ENCODE measurements at regions of chrX and their contacts with region 1.

Region 1: DNA sequence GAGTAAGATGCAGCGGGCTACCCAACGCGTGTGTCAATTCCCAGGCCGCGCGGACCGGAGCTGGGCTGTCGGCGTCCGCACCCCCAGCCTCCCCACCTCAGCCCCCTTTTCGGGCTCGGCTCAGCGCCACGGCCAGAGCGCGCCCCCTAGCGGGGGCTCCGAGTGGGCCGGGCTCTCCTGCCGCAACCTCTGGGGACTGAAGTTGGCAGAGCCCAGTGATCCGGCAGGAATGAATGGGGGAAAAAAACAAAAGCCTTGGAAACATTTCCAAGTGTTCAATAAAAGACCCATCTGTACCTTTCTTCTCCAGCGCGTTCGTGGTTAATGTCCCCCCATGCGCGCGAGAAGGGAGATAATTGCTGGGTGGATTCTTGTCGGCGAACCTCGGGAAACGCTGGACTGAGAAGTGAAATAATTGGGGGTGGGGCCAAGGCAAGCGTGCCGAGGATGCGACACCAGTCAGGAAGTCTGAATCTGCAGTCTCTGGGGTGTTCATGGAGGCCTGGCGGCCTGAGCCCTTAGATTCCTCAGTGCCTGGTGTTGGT is 5.2 kb upstream of the ARX start:
- DNase-seq: no peak
- ATAC-seq: peak; percentile 86
- H3K4me3 ChIP-seq: no peak overlapping the region
- H3K27ac ChIP-seq: no peak overlapping the region
- H3K4me1 ChIP-seq: no peaks in the 10 kb centered on the region
- H3K27me3 ChIP-seq: peaks cover 5 to 13% of the 10 kb centered on the region in 2 experiments
- CTCF ChIP-seq: peak; percentile 58 to 74 (median 59)
- EP300 ChIP-seq: no peak
- POLR2A ChIP-seq: no peak
- RAD21 ChIP-seq: peak; percentile 63

Region 2: DNA sequence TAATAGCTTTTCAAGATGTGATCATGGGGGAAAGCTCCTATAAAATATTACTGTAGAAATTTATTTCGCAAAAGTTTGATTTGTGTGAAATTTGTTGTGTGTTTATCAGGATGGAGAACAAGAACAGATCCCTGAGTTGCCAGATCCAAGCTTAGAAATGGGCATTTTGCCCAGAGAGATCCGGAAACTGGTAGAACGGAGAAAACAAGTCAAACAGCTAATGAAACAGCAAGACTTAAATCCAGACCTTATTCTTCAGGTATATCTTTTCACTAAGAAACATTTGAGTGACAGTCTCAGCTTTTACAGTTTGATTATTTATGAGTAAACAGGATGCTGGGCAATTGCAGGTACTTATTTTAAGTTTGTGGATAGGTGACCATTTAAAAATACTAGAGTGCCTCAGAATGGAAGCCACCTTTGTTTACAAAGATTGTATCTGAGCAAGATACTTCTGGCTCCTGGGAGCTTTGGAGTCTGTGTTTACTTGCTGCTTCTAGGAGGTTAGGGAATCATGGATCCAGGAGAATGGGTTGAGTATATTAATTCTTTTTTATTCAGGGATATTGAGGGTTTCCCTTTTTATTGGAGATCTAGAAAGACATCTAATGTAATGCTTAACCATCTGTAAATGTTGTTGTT is 272.7 kb before region 1 on chrX:
- CTCF ChIA-PET with region 1: interaction called, 10 read pairs
- POLR2A ChIA-PET with region 1: no interaction called
- RAD21 ChIA-PET with region 1: interaction called, 3 read pairs
- SMC1A ChIA-PET with region 1: no interaction called
- in situ Hi-C with region 1: no loop called
- intact Hi-C with region 1: loop called (anchors 1 kb)
- DNase-seq: no peak
- ATAC-seq: no peak
- H3K4me3 ChIP-seq: no peak overlapping the region
- H3K27ac ChIP-seq: no peak overlapping the region
- H3K4me1 ChIP-seq: no peaks in the 10 kb centered on the region
- H3K27me3 ChIP-seq: no peaks in the 10 kb centered on the region
- CTCF ChIP-seq: no peak
- EP300 ChIP-seq: no peak
- POLR2A ChIP-seq: no peak
- RAD21 ChIP-seq: no peak

Region 3: DNA sequence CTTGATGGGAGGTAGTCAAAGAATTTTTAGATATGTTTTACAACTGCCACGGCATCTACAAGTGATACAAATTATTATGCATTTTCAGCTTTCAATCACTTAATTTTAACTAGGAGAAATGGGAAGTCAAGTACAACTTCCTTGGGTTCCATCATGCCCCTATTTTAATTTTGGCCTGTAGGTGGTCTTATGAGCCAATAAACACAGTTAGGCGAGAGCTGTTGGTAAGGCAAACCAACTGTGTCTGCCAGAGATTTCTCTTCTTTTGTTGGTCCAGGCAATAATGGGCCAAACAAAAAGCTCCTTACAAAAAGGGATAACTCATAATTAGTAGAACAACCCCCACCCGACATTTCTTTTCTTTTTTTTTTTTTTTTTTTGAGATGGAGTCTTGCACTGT is 58.0 kb after region 1 on chrX:
- CTCF ChIA-PET with region 1: no interaction called
- POLR2A ChIA-PET with region 1: no interaction called
- RAD21 ChIA-PET with region 1: no interaction called
- SMC1A ChIA-PET with region 1: no interaction called
- in situ Hi-C with region 1: no loop called
- intact Hi-C with region 1: no loop called
- DNase-seq: no peak
- ATAC-seq: no peak
- H3K4me3 ChIP-seq: no peak overlapping the region
- H3K27ac ChIP-seq: no peak overlapping the region
- H3K4me1 ChIP-seq: no peaks in the 10 kb centered on the region
- H3K27me3 ChIP-seq: peaks cover 0 to 1% of the 10 kb centered on the region in 2 experiments; a peak in 3 of 4 replicates
- CTCF ChIP-seq: no peak
- EP300 ChIP-seq: no peak
- POLR2A ChIP-seq: no peak
- RAD21 ChIP-seq: no peak

Measured in GM12878 (cell line).